ENCODE measurements at regions of chr1 and their contacts with region 1.

Region 1: GRCh38 chr1:54800899-54801759 is at the start of gene TTC22:
- DNase-seq: peak; percentile 49 to 71 (median 64)
- ATAC-seq: peak; percentile 91
- H3K4me3 ChIP-seq: peak within 1 kb of the TSS; percentile 94
- H3K4me3 Mint-ChIP-seq: peak within 1 kb of the TSS; percentile 90 to 99 (median 96)
- H3K27ac ChIP-seq: peak within 1 kb of the TSS; percentile 74
- H3K27ac Mint-ChIP-seq: peak within 1 kb of the TSS; percentile 82 to 97 (median 90)
- H3K4me1 ChIP-seq: peaks cover 38 to 44% of the 10 kb centered on the region in 2 donors
- H3K4me1 Mint-ChIP-seq: peaks cover 32 to 77% (median 56%) of the 10 kb centered on the region in 7 donors
- H3K27me3 ChIP-seq: no peaks in the 10 kb centered on the region
- H3K27me3 Mint-ChIP-seq: no peaks in the 10 kb centered on the region
- total RNA-seq, gene TTC22: 7.0 to 16.6 (median 9.8) TPM

Region 2: GRCh38 chr1:53398091-53398490 is 1403.0 kb before region 1 on chr1:
- CTCF ChIA-PET with region 1: no interaction called
- POLR2A ChIA-PET with region 1: no interaction called
- intact Hi-C with region 1: no loop called
- DNase-seq: no peak
- ATAC-seq: no peak
- H3K4me3 ChIP-seq: no peak overlapping the region
- H3K4me3 Mint-ChIP-seq: no peak overlapping the region
- H3K27ac ChIP-seq: no peak overlapping the region
- H3K27ac Mint-ChIP-seq: peak overlapping the region in 1 of 9 donors; percentile 31
- H3K4me1 ChIP-seq: no peaks in the 10 kb centered on the region
- H3K4me1 Mint-ChIP-seq: peaks cover 0 to 6% (median 0%) of the 10 kb centered on the region in 7 donors
- H3K27me3 ChIP-seq: no peaks in the 10 kb centered on the region
- H3K27me3 Mint-ChIP-seq: peaks cover 0 to 14% (median 0%) of the 10 kb centered on the region in 5 donors

Region 3: DNA sequence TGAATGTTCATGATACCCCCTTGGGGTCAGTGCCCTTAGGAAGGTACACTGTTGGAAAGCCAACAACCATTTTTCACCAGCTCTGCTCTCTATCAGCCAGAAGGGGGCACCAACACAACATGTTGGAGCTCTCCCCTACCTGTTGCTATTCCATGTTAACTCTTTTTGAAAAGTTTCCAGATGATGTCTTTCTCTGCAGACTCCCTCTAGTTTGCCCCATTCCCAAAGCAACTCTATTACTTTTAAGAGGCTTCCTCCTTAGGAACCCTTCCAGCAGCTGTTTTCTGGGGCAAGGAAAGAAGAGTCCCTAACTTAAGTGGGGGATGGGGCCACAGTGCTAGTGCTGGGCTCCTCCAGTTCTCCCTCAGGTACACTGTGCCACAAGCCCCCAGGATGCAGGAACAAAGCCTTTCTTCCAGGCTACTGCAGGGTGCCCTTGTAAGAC is 940.1 kb before region 1 on chr1:
- CTCF ChIA-PET with region 1: interaction called, 5 read pairs
- POLR2A ChIA-PET with region 1: no interaction called
- intact Hi-C with region 1: loop called in 1 of 2 experiments (anchors 10 kb)
- DNase-seq: peak in 7 of 9 donors; percentile 43 to 63 (median 53)
- ATAC-seq: peak; percentile 86
- H3K4me3 ChIP-seq: no peak overlapping the region
- H3K4me3 Mint-ChIP-seq: no peak overlapping the region
- H3K27ac ChIP-seq: no peak overlapping the region
- H3K27ac Mint-ChIP-seq: peak overlapping the region in 3 of 9 donors; percentile 29 to 68 (median 34)
- H3K4me1 ChIP-seq: no peaks in the 10 kb centered on the region
- H3K4me1 Mint-ChIP-seq: peaks cover 0 to 9% (median 8%) of the 10 kb centered on the region in 7 donors
- H3K27me3 ChIP-seq: no peaks in the 10 kb centered on the region
- H3K27me3 Mint-ChIP-seq: no peaks in the 10 kb centered on the region

Region 4: DNA sequence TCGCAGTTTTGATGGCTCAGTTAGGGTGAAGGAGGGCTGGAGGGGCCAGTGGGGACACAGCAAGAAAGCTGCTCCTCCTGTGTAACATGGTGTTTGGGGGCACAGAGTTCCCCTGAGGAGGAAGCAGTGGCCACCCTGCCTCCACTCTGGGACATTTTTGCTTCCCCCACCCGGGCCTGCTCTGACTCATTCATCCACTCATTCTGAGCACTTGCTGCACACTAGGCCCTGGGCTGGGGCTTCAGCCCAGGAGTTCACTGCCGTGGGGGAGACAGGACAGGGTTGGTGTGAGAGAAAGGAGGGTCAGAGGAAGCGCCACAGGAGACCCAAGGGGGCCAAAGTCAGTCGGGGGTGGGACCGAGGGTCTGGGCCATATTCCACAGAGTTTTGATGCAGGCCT is 294.5 kb before region 1 on chr1:
- CTCF ChIA-PET with region 1: interaction called, 11 read pairs
- POLR2A ChIA-PET with region 1: no interaction called
- intact Hi-C with region 1: no loop called
- DNase-seq: no peak
- ATAC-seq: no peak
- H3K4me3 ChIP-seq: no peak overlapping the region
- H3K4me3 Mint-ChIP-seq: no peak overlapping the region
- H3K27ac ChIP-seq: no peak overlapping the region
- H3K27ac Mint-ChIP-seq: peak overlapping the region in 1 of 9 donors; percentile 34
- H3K4me1 ChIP-seq: no peaks in the 10 kb centered on the region
- H3K4me1 Mint-ChIP-seq: no peaks in the 10 kb centered on the region
- H3K27me3 ChIP-seq: no peaks in the 10 kb centered on the region
- H3K27me3 Mint-ChIP-seq: peaks cover 6 to 16% (median 12%) of the 10 kb centered on the region in 5 donors

Region 5: GRCh38 chr1:54671985-54672608 is 129.0 kb before region 1 on chr1:
- CTCF ChIA-PET with region 1: interaction called, 5 read pairs
- POLR2A ChIA-PET with region 1: interaction called, 3 read pairs
- intact Hi-C with region 1: loop called in 1 of 2 experiments (anchors 2 kb)
- DNase-seq: peak; percentile 18 to 69 (median 53)
- ATAC-seq: peak; percentile 86
- H3K4me3 ChIP-seq: no peak overlapping the region
- H3K4me3 Mint-ChIP-seq: no peak overlapping the region
- H3K27ac ChIP-seq: no peak overlapping the region
- H3K27ac Mint-ChIP-seq: no peak overlapping the region
- H3K4me1 ChIP-seq: no peaks in the 10 kb centered on the region
- H3K4me1 Mint-ChIP-seq: peaks cover 0 to 6% (median 0%) of the 10 kb centered on the region in 7 donors
- H3K27me3 ChIP-seq: no peaks in the 10 kb centered on the region
- H3K27me3 Mint-ChIP-seq: peaks cover 0 to 10% (median 0%) of the 10 kb centered on the region in 5 donors

Region 6: DNA sequence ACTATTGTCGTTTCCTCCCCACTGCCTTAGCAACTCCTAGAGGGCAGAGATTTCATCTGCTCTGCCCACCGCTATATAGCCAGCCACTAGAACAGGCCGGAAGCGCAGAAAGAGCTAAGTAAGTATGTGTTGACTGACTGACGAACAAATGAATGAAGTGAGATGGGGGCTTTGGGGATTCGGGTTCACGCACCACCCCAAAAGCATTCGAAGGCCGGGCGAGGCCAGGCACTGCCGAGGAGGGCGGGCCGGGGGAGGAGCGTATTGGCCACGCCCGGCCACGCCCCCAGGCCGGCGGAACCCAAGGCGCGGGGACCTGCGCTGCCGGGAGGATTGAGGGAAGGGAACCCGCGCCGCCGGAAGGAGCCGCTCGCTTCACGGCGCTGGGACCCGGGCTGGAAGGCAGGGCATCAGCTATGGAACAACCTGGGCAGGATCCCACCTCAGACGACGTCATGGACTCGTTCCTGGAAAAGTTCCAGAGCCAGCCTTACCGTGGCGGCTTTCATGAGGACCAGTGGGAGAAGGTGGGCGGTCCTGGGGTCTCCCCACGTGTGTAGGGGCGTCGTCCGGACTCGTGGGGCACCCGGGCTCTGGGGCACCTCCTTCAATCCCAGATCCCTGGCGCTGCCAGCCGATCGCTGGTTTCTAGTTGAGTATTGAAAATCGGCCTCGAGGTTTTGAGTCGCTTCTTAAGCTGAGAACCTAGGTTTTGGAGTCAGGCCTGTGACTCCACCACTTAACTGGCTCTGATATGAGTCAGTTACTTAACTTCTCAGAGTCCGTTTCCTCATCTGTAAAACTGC is 85.4 kb before region 1 on chr1 and contains the start of gene TTC4:
- CTCF ChIA-PET with region 1: interaction called, 3 read pairs
- POLR2A ChIA-PET with region 1: interaction called, 17 read pairs
- intact Hi-C with region 1: loop called (anchors 1 to 2 kb)
- DNase-seq: peak; percentile 71 to 92 (median 85)
- ATAC-seq: peak; percentile 99
- H3K4me3 ChIP-seq: peak within 1 kb of the TSS; percentile 86
- H3K4me3 Mint-ChIP-seq: peak within 1 kb of the TSS; percentile 81 to 96 (median 88)
- H3K27ac ChIP-seq: peak within 1 kb of the TSS; percentile 84
- H3K27ac Mint-ChIP-seq: peak within 1 kb of the TSS; percentile 58 to 94 (median 91)
- H3K4me1 ChIP-seq: peaks cover 14 to 15% of the 10 kb centered on the region in 2 donors
- H3K4me1 Mint-ChIP-seq: peaks cover 15 to 42% (median 34%) of the 10 kb centered on the region in 7 donors
- H3K27me3 ChIP-seq: no peaks in the 10 kb centered on the region
- H3K27me3 Mint-ChIP-seq: no peaks in the 10 kb centered on the region
- total RNA-seq, gene TTC4: 11.6 to 25.8 (median 21.4) TPM

Region 7: GRCh38 chr1:54886724-54887664 is 85.9 kb after region 1 on chr1 and contains the start of gene DHCR24:
- CTCF ChIA-PET with region 1: no interaction called
- POLR2A ChIA-PET with region 1: interaction called, 4 read pairs
- intact Hi-C with region 1: loop called in 1 of 2 experiments (anchors 5 kb)
- DNase-seq: peak; percentile 43 to 90 (median 58)
- ATAC-seq: peak; percentile 93
- H3K4me3 ChIP-seq: peak within 1 kb of the TSS; percentile 66
- H3K4me3 Mint-ChIP-seq: peak within 1 kb of the TSS; percentile 89 to 99 (median 96)
- H3K27ac ChIP-seq: peak within 1 kb of the TSS; percentile 27
- H3K27ac Mint-ChIP-seq: peak within 1 kb of the TSS; percentile 25 to 89 (median 73)
- H3K4me1 ChIP-seq: peaks cover 0 to 11% of the 10 kb centered on the region in 2 donors
- H3K4me1 Mint-ChIP-seq: peaks cover 13 to 55% (median 37%) of the 10 kb centered on the region in 7 donors
- H3K27me3 ChIP-seq: no peaks in the 10 kb centered on the region
- H3K27me3 Mint-ChIP-seq: peaks cover 0 to 18% (median 3%) of the 10 kb centered on the region in 5 donors
- total RNA-seq, gene DHCR24: 2.7 to 103 (median 8.3) TPM

Region 8: GRCh38 chr1:55474168-55474786 is 673.1 kb after region 1 on chr1:
- CTCF ChIA-PET with region 1: no interaction called
- POLR2A ChIA-PET with region 1: no interaction called
- intact Hi-C with region 1: no loop called
- DNase-seq: no peak
- ATAC-seq: peak; percentile 44
- H3K4me3 ChIP-seq: no peak overlapping the region
- H3K4me3 Mint-ChIP-seq: no peak overlapping the region
- H3K27ac ChIP-seq: no peak overlapping the region
- H3K27ac Mint-ChIP-seq: no peak overlapping the region
- H3K4me1 ChIP-seq: no peaks in the 10 kb centered on the region
- H3K4me1 Mint-ChIP-seq: peaks cover 0 to 1% (median 0%) of the 10 kb centered on the region in 7 donors
- H3K27me3 ChIP-seq: no peaks in the 10 kb centered on the region
- H3K27me3 Mint-ChIP-seq: peaks cover 11 to 40% (median 29%) of the 10 kb centered on the region in 5 donors

Measured in naive thymus-derived CD4-positive, alpha-beta T cell (primary cell).